Naive thymus-derived CD8-positive, alpha-beta T cell (primary cell): ENCODE measurements at regions of chr10 and their contacts with region 1.

Region 1: DNA sequence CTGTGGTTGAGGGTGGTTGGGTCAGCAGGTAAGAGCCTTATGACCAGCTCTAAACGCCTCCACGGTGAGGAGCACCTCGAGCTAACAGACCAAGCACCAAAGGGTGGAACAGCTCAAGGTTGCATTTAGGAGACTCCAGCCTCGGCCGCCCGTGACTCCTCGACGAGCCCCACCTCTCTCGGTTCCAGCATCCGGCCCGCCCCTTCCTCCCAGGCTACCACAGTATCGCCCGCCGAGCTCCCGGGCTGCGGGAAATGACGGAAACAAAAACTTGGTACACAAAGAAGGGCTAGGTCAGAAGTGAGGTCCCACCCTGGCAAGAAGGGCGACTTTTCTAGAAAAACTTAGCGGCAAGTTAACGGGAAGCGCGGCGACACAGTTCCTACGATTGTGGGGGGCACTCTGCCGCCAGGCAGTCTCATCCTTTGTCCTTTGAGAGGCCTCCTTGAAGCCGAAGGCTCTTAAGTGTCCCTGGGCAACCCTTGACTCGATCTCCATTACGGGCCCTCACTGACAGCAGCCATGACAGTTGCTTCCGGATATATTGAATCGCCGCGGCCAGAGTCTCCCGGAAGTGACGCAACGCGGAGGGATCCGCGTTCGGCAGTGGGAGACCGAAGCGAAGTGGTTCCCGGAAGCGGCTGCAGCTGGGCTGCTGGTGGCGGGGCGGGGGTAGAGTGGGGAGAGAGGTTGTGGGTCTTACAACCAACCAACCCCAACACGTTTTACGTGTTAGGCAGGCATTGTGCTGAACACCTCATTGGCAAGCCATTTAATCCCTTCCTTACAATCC is 40.2 kb upstream of the ZNF518A start:
- DNase-seq: peak; percentile 84 to 96 (median 92)
- ATAC-seq: peak; percentile 85 to 89
- H3K4me3 Mint-ChIP-seq: peak overlapping the region; percentile 87 to 97 (median 95)
- H3K27ac Mint-ChIP-seq: peak overlapping the region; percentile 97 to 99 (median 99)
- H3K4me1 Mint-ChIP-seq: peaks cover 3 to 17% (median 10%) of the 10 kb centered on the region in 4 donors
- H3K27me3 Mint-ChIP-seq: peaks cover 16 to 36% (median 25%) of the 10 kb centered on the region in 5 donors

Region 2: GRCh38 chr10:96053985-96054384 is 35.9 kb before region 1 on chr10:
- POLR2A ChIA-PET with region 1: no interaction called
- DNase-seq: no peak
- ATAC-seq: no peak
- H3K4me3 Mint-ChIP-seq: no peak overlapping the region
- H3K27ac Mint-ChIP-seq: peak overlapping the region in 1 of 10 donors; percentile 6
- H3K4me1 Mint-ChIP-seq: peaks cover 13 to 39% (median 29%) of the 10 kb centered on the region in 4 donors
- H3K27me3 Mint-ChIP-seq: no peaks in the 10 kb centered on the region

Region 3: DNA sequence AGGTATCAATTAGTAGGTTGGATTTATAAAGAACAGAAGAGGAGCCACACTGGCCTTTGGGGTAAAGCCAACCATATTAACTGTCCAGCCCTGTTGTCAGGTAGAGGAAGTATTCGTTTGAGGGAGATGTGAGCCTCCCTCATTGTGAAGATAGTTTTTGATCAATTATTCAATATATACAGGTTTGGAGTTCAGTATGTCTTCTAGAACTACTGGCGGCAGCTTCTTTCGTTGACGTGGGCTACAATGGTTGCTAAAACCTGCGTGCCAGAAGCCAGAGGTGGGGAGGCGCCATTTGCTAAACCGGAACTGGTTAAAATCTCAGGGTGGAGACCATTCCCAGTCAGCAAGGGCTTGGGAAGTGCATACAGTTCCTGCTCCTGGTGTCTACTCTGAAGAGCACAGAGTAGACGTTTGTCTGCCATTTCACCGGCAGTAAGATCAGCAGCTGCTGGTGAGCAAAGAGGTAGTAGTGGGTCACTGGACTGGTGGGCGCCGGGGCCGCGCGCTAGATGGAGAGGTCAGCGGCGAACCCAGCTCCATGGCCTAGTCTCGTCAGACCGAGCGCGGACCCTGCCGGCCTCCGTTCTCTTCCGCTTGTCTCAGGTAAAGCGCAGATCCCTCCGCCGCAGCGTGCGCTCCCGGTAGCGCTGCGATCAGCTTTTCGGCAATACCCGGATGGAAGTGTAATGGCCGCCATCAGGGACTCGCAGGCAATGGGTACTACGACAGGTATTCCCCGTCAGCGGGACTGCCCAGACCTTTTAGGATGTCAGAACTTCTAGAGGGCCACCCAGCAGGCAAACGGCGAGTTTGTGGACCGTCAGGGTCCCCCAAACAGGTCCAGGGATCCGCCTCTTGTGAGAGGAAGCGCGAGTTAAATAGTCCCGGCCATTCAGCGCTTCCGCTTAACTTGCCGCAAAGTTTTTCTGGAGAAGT is 39.8 kb after region 1 on chr10 and contains the start of gene ZNF518A:
- POLR2A ChIA-PET with region 1: interaction called, 211 read pairs
- DNase-seq: peak; percentile 70 to 98 (median 88)
- ATAC-seq: peak; percentile 81 to 83
- H3K4me3 Mint-ChIP-seq: peak within 1 kb of the TSS; percentile 85 to 98 (median 94)
- H3K27ac Mint-ChIP-seq: peak within 1 kb of the TSS; percentile 94 to 100 (median 99)
- H3K4me1 Mint-ChIP-seq: peaks cover 5 to 24% (median 22%) of the 10 kb centered on the region in 4 donors
- H3K27me3 Mint-ChIP-seq: peaks cover 14 to 41% (median 39%) of the 10 kb centered on the region in 5 donors
- polyA plus RNA-seq, gene ZNF518A: 7.6 to 11.2 (median 10.2) TPM